ENCODE measurements at regions of chr15 and their contacts with region 1.

Region 1: DNA sequence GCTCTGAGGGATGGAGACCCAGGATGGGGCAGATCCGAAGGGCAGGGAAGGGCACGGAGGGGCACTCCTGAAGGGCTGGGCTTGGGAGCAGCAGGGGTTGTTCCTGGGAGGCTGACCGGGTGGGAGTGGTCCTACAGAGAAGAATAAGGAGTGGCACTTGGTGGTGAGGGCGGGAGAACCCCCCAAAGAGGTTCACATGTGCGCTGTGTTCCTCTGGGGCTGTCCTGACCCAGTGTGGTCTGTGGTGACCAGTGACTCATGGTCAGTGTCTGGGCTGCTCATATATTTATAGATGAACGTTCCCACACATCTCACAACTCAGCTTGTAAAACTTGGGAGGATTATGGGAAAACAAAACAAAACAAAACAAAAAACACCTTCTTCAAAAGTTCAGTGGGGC is 10.0 kb downstream of the TRPM1 start:
- DNase-seq: no peak
- H3K4me3 ChIP-seq: no peak overlapping the region
- H3K27ac ChIP-seq: no peak overlapping the region
- H3K4me1 ChIP-seq: no peaks in the 10 kb centered on the region
- H3K27me3 ChIP-seq: no peaks in the 10 kb centered on the region
- CTCF ChIP-seq: no peak
- POLR2A ChIP-seq: no peak

Region 2: DNA sequence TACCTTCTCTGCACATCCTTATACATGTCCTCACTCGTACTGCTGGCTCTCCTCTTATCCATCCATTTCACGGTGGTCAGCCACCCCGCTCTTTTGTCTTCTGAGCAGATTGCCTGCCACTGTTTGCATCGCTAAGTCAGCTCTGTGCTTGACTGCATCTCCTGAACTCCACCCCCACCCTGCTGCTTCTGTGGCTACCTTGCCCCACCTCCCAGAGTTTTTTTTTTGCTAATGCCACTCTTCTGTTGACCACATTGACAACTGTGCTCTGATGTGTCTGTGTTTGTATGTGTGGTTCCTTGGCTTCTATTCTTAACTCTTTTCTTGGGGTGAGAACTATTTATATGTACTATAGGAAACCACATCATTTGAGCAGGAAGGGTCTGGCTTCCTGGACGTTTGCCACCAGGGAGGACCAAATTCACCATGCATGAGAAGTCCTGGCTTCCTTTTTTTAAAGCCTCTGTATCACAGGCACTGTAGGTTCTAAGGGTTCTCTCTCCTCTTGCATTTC is 87.2 kb before region 1 on chr15:
- intact Hi-C with region 1: no loop called
- DNase-seq: no peak
- H3K4me3 ChIP-seq: no peak overlapping the region
- H3K27ac ChIP-seq: no peak overlapping the region
- H3K4me1 ChIP-seq: no peaks in the 10 kb centered on the region
- H3K27me3 ChIP-seq: no peaks in the 10 kb centered on the region
- CTCF ChIP-seq: no peak
- POLR2A ChIP-seq: no peak

Region 3: DNA sequence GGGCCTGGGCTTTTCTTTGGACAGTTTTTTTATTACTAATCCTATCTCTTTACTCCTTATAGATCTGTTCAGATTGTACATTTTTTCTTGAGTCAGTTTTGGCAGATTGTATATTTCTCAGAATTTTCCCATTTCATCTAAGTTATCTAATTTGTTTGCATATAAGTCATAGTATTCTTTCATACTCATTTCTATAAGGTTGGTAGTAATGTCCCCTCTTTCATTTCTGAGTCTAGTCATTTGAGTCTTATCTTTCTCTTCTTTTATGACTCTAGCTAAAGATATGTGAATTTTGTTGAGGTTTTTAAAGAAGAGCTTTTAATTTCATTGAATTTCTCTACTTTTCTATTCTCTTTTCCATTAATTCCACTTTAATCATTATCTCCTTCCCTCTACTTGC is 17.2 kb before region 1 on chr15:
- intact Hi-C with region 1: loop called (anchors 2 kb)
- DNase-seq: no peak
- H3K4me3 ChIP-seq: no peak overlapping the region
- H3K27ac ChIP-seq: no peak overlapping the region
- H3K4me1 ChIP-seq: peaks cover 9% of the 10 kb centered on the region
- H3K27me3 ChIP-seq: no peaks in the 10 kb centered on the region
- CTCF ChIP-seq: no peak
- POLR2A ChIP-seq: no peak

Region 4: DNA sequence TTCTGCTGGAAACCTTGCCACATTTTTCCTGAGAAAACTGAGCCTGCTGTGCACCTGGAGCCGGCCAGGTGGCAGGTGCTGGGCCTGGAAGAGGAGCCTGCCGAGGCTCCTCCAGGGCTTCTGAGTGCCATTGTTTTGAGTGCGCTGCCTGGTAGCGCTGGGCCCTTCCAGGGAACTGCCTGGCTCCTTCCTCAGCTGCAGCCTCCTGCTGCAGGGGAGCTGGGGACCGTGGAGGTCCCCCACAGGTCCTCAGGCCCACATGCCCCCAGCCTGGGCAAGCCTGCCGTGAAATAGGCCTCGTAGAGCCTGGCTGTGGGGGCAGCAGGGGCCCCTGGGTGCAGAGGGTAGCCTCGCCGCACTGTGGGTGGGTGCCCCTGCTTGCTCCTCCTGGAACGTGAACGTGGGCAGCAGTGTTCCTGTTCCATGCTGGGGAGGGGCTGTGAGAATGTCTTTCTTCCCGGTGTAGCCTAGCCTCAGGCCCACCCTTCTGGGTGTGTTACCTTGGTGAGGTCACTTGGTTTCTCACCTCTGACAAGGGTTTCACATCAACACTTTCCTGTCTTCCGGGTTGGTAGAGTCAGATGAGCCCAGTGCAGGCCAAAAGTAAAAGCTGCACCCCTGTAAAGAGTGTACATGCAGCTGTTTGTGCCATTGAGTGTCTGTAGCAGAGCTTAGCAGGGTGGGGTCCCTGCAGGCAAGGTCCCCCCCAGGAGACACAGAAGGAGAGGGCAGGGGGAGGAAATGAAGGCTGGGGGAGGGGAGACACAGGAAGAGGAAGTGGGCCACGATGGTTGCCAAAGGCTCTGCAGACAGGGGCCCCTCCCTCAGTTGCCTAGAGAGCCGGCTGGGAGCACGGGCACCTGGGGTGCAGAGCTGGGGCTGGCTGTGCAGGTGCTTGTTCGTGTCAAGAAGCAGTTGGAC is 269.6 kb after region 1 on chr15:
- intact Hi-C with region 1: no loop called
- DNase-seq: no peak
- H3K4me3 ChIP-seq: no peak overlapping the region
- H3K27ac ChIP-seq: peak overlapping the region; percentile 41 to 52
- H3K4me1 ChIP-seq: peaks cover 11% of the 10 kb centered on the region
- H3K27me3 ChIP-seq: no peaks in the 10 kb centered on the region
- CTCF ChIP-seq: no peak
- POLR2A ChIP-seq: no peak

Measured in prostate gland (tissue), 2 donors.